PC-9 (cell line): ENCODE measurements at regions of chr15 and their contacts with region 1.

Region 1: GRCh38 chr15:38440353-38441129 is 13.4 kb upstream of the FAM98B start:
- DNase-seq: peak; percentile 61 to 66
- H3K4me3 ChIP-seq: peak overlapping the region; percentile 35; the same call in 1 of the 2 replicates
- H3K27ac ChIP-seq: no peak overlapping the region
- H3K4me1 ChIP-seq: peaks cover 7% of the 10 kb centered on the region; the same call in 1 of the 2 replicates
- H3K27me3 ChIP-seq: no peaks in the 10 kb centered on the region
- CTCF ChIP-seq: peak; percentile 91

Region 2: DNA sequence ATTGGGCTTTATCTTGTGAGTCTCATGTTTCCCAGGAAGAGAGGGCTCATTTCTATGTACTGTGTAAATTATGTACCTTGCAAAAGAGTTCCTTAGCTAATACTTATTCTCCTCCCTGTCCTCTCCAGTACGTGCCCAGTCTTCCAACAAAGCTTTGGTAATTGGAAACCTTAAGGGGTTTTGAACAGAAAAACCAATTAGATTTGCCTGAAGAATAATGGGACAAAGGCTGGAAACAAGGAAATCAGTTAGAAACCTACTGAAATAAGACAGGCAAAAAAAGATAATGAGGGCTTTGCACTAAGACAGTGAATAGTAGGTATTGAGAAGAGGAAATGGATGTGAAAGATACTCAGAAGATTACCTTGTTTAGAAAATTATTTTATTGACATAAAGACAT is 105.4 kb before region 1 on chr15:
- CTCF ChIA-PET with region 1: interaction called, 12 read pairs
- POLR2A ChIA-PET with region 1: no interaction called
- intact Hi-C with region 1: no loop called
- DNase-seq: no peak
- H3K4me3 ChIP-seq: no peak overlapping the region
- H3K27ac ChIP-seq: no peak overlapping the region
- H3K4me1 ChIP-seq: no peaks in the 10 kb centered on the region
- H3K27me3 ChIP-seq: no peaks in the 10 kb centered on the region
- CTCF ChIP-seq: no peak

Region 3: GRCh38 chr15:38453971-38454695 is 13.6 kb after region 1 on chr15 and contains the start of gene FAM98B:
- CTCF ChIA-PET with region 1: interaction called, 10 read pairs
- POLR2A ChIA-PET with region 1: interaction called, 10 read pairs
- intact Hi-C with region 1: no loop called
- DNase-seq: peak; percentile 70 to 91
- H3K4me3 ChIP-seq: peak within 1 kb of the TSS; percentile 67
- H3K27ac ChIP-seq: peak within 1 kb of the TSS; percentile 71
- H3K4me1 ChIP-seq: peaks cover 16% of the 10 kb centered on the region
- H3K27me3 ChIP-seq: no peaks in the 10 kb centered on the region
- CTCF ChIP-seq: no peak
- total RNA-seq, gene FAM98B: 14.6 and 34.7 TPM in 2 replicates

Region 4: DNA sequence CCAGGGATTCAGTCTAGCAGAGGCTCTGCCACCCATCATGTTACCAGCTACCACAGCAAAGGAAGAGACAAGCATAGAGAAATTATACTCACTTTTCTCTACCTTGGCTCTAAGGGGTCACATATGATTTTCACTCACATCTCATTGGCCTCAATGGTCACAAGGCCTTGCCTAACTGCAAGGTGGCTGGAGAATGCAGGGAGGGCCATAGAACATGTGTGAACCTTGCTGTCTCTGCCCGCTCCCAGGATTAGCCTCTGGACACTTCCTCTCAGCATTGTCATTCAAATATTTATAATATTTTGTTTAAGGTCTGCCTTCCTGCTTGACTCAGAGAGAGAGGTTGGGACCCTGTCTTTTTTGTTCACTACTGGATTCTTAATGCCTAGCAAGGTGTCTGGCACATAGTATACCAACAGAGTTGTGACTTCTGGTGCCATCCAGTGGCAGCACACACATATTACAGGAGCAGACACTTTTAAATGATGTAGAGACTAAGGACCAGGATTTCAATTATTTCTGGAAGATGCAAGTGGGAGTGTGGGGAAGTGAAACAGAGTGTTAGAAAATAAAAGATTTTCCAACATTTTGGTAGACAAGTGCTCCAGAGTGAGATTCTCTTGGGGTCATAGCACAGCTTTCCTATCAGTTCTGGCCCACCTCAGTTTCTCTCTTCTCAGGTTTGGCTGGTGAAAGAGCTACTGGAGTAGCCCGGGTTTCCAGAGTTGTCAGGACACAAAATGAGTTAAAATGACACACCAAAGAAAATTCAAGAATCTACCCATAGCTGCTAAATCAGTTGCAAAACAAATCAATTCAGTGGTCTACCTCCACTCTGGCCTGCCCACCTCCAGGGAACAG is 243.1 kb after region 1 on chr15:
- CTCF ChIA-PET with region 1: interaction called, 14 read pairs
- POLR2A ChIA-PET with region 1: no interaction called
- intact Hi-C with region 1: loop called (anchors 2 kb)
- DNase-seq: peak in 1 of 2 experiments; percentile 41
- H3K4me3 ChIP-seq: no peak overlapping the region
- H3K27ac ChIP-seq: no peak overlapping the region
- H3K4me1 ChIP-seq: no peaks in the 10 kb centered on the region
- H3K27me3 ChIP-seq: no peaks in the 10 kb centered on the region
- CTCF ChIP-seq: peak; percentile 77

Region 5: DNA sequence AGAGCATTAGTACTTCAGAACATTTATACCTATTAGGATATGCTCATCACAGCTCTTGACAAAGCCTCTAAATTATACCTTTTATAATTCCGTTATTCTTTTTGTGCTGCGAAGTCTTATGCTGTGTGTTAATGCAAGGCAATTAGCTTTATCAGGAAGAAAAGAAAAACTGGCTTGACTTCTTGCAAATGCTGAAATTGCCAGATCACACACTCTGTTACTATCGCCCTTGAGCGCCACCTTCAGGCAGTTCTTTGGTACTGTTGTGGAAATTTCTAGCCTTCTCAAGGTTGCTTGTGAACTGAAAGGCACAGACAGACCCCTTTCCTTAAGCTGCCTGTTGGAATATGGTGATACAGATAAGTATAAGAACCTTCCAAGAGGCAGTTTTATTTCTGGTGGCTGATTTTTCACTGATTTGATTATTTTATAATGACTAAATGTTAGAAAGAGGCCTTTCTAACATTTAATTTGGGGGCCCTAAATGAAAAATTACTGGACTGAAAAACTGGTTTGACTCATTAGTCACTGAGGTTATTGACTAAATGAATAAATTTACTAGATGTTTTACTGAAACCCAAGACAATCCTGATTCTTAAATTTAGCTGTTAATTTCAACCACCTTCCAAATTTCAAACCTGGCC is 250.3 kb after region 1 on chr15:
- CTCF ChIA-PET with region 1: interaction called, 3 read pairs
- POLR2A ChIA-PET with region 1: no interaction called
- intact Hi-C with region 1: loop called (anchors 2 kb)
- DNase-seq: peak in 1 of 2 experiments; percentile 61
- H3K4me3 ChIP-seq: no peak overlapping the region
- H3K27ac ChIP-seq: no peak overlapping the region
- H3K4me1 ChIP-seq: no peaks in the 10 kb centered on the region
- H3K27me3 ChIP-seq: no peaks in the 10 kb centered on the region
- CTCF ChIP-seq: peak; percentile 76